Activated CD4-positive, alpha-beta T cell treated with anti-CD3 and anti-CD28 coated beads for 36 hours (primary cell): ENCODE measurements at regions of chr2 and their contacts with region 1.

Region 1: DNA sequence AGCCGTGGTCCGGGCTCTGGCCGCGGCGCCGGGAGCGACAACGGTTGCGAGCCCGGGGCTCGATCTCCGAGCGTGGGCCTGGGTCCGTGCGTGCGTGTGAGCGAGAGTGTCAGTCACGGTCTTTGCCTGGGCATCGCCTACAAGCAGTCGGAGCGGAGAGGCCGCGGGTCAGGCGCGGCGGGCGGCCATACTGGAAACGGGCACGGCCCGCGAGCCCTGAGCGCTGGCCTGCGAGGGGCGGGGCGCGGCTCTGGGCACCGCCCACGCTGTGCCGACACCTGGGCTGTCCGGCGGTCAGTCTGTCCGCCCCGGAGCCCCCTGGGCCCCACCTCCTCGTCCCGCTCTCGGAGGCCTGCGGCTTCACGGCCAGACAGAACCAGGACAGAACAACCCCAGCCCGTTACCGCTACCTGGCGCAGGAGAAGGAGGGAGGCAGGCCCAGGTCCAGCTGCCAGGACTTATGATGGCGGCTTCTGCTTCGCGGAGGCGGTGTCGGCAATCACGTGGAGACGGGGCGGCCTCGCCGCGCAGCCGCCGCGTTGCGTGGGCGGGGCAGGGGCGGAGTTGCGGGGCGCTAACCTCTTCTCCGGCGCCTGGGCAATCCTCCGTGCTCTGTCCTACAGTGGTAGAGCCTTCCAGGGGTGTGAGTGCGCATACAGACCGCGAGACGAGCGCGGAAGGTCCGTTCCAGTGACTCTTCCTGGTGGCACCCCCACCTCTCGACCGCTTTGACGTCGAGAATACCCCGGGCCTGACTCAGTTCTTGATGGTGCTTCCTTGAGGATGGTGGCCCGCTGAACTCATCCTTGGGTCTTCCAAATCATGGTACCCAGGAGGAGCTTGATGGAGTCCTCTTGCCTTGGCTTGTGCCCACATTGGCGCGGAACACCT is at the start of gene TMEM131:
- DNase-seq: peak; percentile 97
- ATAC-seq: peak; percentile 84
- H3K4me3 Mint-ChIP-seq: peak within 1 kb of the TSS; percentile 85
- H3K27ac Mint-ChIP-seq: peak within 1 kb of the TSS; percentile 97
- H3K4me1 Mint-ChIP-seq: peaks cover 35% of the 10 kb centered on the region
- H3K27me3 Mint-ChIP-seq: no peaks in the 10 kb centered on the region
- total RNA-seq, gene TMEM131: 25.8 to 32.5 TPM

Region 2: DNA sequence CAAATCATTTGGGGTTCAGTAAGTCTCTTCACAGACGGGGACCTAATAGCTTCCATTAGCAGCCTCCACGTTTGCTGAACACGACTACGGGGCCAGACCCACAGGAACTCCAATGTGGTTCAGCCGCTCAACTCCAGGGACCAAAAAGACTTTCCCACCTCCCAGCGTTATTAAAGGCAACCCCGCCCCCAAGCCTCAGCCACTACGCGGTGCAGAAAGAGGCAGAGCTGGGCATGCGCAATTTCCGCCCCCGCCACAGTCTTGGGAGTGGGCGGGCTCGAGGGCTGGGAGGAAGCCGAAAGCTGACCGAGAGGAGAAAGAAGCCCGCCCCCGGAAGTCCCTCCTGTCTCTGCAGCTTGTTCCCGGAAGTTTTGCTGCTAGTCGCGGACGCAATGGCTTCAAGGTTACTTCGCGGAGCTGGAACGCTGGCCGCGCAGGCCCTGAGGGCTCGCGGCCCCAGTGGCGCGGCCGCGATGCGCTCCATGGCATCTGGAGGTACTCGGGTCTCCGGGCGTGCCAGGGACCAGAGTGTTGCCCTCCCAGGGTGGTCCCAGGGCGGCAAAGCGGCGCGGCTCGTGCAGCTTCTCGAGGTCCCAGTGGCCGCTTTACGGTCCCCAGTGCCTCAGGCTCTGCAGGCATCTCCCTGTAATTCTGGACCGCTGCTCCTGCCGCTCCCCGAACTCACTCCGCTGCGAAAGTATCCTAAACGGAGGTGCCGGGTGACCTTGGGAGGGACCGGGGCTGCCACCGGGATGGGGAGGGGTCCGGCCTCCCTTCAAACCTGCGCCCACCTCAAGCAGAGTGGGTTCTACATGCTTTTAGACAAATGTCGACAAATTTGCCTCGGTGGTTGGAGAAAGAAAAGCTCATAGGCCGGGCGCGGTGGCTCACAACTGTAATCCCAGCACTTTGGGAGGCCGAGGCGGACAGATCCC is 350.0 kb before region 1 on chr2 and contains the start of gene COX5B:
- CTCF ChIA-PET with region 1: no interaction called
- POLR2A ChIA-PET with region 1: no interaction called
- intact Hi-C with region 1: loop called in 1 of 2 experiments (anchors 1 kb)
- DNase-seq: peak; percentile 99
- ATAC-seq: peak; percentile 96
- H3K4me3 Mint-ChIP-seq: peak within 1 kb of the TSS; percentile 87
- H3K27ac Mint-ChIP-seq: peak within 1 kb of the TSS; percentile 98
- H3K4me1 Mint-ChIP-seq: peaks cover 14% of the 10 kb centered on the region
- H3K27me3 Mint-ChIP-seq: no peaks in the 10 kb centered on the region
- total RNA-seq, gene COX5B: 189 to 220 TPM

Region 3: GRCh38 chr2:97806738-97807618 is 189.0 kb before region 1 on chr2:
- CTCF ChIA-PET with region 1: interaction called, 3 read pairs
- POLR2A ChIA-PET with region 1: no interaction called
- intact Hi-C with region 1: loop called (anchors 2 to 5 kb)
- DNase-seq: peak; percentile 91
- ATAC-seq: peak; percentile 98
- H3K4me3 Mint-ChIP-seq: no peak overlapping the region
- H3K27ac Mint-ChIP-seq: no peak overlapping the region
- H3K4me1 Mint-ChIP-seq: peaks cover 2% of the 10 kb centered on the region
- H3K27me3 Mint-ChIP-seq: no peaks in the 10 kb centered on the region

Region 4: DNA sequence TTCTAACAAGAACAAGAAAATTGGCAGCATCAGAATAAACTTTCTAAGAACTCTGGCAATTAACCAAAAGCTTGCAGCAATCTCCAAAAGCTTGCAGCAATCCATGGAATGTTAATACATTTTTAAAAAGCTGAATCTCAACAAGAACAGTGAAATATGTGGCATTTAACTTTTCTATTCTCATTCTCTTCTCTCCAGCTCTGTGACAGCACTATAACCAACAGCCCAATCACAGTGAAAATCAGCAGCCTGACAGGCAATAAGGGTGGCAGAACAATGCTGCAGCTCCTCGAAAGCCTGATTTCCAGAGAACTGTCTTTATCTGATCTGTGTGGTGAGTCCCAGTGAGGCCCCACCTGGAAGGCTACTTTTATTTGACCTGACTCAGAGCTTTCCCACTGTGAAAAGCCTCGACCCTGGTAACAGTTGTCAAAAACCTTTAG is 60.2 kb before region 1 on chr2:
- CTCF ChIA-PET with region 1: no interaction called
- POLR2A ChIA-PET with region 1: no interaction called
- intact Hi-C with region 1: no loop called
- DNase-seq: no peak
- ATAC-seq: no peak
- H3K4me3 Mint-ChIP-seq: no peak overlapping the region
- H3K27ac Mint-ChIP-seq: no peak overlapping the region
- H3K4me1 Mint-ChIP-seq: peaks cover 66% of the 10 kb centered on the region
- H3K27me3 Mint-ChIP-seq: no peaks in the 10 kb centered on the region

Region 5: DNA sequence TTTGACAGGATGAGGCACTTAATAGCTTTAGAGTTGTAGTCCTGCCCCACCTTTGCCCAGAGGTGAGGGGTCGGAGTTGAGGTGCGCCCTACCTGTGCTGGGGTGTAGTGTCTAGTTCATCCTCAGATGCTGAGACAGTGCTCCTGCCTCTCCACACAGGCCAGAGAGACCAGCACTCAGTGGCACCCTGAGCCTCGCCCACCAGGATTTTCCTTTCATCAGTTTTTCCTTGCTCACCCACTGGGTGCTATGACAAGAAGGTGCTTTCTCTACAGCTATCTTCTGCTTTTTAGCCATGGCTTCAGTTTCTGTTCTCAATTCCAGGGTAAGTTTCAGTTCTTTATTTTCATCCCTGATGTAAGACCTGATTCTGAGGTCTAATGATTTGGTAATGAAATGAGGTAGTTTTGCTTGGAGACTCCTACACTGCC is 16.6 kb after region 1 on chr2:
- CTCF ChIA-PET with region 1: no interaction called
- POLR2A ChIA-PET with region 1: interaction called, 4 read pairs
- intact Hi-C with region 1: loop called in 1 of 2 experiments (anchors 1 kb)
- DNase-seq: peak; percentile 81
- ATAC-seq: peak; percentile 83
- H3K4me3 Mint-ChIP-seq: no peak overlapping the region
- H3K27ac Mint-ChIP-seq: peak overlapping the region; percentile 61
- H3K4me1 Mint-ChIP-seq: peaks cover 33% of the 10 kb centered on the region
- H3K27me3 Mint-ChIP-seq: peaks cover 9% of the 10 kb centered on the region

Region 6: DNA sequence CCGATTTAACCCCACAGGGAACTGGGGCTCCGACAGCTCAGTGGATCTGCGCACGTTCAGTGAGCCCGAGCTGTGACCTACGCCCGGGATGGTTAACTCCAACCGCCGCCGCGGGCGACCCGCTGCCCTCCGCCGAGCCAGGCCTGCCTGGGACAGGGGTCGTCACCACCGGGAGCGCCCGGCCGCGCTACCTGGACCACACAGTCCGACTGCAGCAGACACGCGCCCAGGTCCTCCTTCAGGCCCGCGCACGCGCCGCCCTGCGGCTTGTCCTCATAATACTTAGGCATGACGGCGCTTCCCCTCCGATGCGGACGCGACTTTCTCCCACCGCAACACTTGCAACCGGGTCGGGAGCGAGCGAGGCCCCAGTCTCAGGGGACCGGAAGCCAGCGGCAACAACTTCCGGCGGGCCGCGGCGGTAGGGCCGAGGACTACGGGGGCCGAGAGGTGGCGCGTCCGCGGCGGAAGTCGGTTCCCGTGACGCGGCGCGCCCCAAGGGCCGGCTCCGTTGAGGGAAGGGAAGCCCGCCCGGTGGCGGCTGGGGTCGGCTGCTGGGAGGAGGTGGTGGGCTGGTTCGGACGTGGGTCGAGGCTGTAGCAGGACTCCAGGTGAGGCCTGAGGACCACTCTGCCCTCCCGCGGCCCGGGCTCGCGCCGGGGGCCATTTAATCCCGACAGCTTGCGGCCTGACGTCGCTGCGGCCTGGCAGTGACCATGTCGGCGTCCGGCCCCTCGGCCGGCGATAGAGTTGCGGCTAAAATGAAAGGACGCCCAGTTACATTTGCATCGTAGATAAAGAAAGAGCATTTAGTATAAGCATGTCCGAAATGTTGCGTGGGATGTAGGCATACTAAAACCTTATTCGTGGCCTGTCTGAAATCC is 612.4 kb after region 1 on chr2 and contains the starts of genes COA5 and UNC50:
- CTCF ChIA-PET with region 1: no interaction called
- POLR2A ChIA-PET with region 1: no interaction called
- intact Hi-C with region 1: loop called in 1 of 2 experiments (anchors 10 kb)
- DNase-seq: peak; percentile 95
- ATAC-seq: peak; percentile 91
- H3K4me3 Mint-ChIP-seq: peak within 1 kb of the TSS; percentile 83
- H3K27ac Mint-ChIP-seq: peak within 1 kb of the TSS; percentile 94
- H3K4me1 Mint-ChIP-seq: peaks cover 61% of the 10 kb centered on the region
- H3K27me3 Mint-ChIP-seq: no peaks in the 10 kb centered on the region
- total RNA-seq, gene COA5: 17.7 to 33.2 TPM
- total RNA-seq, gene UNC50: 21.1 to 31.4 TPM